Head of caudate nucleus (tissue), 42 donors: ENCODE measurements at regions of chr10 and their contacts with region 1.

Region 1: DNA sequence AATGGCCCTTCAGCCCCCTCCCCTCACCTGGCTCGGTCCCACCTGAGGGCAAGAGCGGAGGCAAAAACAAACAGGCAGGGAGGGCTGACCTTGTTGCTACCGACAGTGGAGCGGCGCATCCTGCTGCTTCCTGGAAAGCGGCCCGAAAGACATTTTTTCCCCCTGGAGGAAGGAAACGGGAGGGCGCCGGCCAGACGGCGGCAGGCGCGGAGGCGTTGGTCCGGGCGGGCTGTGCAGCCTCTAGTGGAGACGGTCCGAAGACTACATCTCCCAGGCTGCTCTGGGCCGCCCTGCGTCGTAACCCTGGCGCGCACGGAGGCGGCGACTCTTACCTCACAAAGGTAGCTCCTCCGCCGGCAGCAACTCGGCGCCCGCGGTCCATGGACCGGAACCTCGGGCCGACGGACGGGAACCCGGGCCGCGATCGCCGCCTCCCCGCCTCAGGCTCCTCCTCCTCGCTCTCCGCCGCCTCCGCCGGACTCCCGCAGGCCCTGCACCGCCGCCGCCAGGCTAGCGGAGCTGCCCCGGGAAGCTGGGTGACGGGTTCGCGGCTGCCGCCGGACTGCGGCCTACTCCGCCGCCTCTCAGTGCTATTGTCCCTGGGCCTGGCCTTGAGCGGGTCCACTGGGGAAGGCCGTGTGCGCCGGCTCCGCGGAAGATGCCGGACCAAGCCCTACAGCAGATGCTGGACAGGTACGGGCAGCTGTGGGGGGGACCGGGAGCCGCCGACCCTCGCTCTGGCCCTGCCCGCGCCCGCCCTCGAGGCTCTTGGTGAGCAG is at the starts of genes CPEB3 and MARCHF5:
- DNase-seq: peak; percentile 89 to 98 (median 95)

Region 2: DNA sequence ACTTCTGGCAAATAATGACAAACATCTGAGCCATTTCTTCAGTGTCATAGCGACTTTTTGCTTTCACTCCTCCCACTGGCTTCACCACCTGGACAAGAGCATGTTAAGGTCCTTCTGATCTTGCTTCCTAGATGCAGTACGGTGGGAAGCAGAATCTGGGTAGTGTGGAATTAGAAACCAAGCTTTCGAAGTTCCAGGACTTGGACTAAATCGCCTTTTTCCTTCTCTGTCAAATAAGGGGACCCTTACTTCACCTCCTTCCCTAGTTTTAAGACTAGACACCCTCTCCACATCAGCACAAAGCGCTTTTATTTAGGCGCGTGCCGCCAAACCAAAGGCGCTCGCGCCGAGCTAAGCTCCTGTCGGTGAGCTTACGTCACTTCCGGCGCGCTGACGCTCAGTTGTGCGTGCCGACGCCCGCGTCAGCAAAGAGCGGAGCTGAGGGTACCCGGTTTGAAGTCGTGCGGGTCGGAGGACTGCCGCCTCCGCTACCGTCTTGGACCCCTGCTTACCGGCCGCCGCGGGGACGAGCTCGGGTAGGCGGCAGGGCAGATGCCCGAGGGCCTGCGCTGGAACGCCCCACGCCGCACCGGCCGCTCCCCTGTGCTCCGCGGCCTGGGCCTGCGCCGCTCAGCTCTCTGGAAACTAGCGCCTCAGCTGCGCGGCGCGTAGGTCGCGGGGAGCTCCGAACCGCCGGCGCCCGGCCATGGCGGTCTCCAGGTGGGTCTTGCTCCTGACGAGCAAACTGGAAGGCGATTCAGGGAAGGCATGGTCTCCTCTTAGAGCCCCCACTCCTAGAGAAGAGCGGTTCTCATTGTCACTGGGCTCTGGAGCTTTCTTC is 367.4 kb before region 1 on chr10 and contains the start of gene BTAF1:
- intact Hi-C with region 1: no loop called
- DNase-seq: peak; percentile 84 to 97 (median 95)

Region 3: DNA sequence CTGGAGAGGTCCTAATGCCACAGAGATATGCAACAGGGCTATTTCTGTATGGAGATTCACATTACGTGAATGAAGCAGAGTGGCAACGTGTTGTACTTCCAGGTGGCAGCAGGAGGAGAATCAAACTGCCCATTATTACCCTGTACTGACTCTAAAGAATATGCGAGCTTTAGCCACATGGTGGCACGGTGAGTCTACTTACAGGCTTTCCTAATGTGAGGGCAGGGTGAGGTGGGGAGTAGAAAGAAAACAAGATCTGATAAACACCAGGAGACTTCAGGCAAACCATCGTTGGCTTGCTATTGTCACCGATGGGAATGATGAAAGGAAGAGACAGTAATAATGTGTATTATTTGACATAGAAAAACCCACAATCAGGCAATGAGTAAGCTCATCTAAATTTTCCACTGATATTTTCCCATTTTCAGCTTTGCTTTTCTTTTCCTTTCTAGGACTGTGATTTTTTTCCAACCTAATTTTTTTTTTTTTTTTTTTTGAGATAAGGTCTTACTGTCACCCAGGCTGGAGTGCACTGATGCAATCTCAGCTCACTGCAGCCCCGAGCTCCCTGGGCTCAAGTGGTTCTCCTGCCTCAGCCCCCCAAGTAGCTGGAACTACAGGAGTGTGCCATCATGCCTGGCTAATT is 203.2 kb before region 1 on chr10:
- intact Hi-C with region 1: loop called (anchors 5 kb)
- DNase-seq: peak in 40 of 42 donors; percentile 33 to 86 (median 68)

Region 4: DNA sequence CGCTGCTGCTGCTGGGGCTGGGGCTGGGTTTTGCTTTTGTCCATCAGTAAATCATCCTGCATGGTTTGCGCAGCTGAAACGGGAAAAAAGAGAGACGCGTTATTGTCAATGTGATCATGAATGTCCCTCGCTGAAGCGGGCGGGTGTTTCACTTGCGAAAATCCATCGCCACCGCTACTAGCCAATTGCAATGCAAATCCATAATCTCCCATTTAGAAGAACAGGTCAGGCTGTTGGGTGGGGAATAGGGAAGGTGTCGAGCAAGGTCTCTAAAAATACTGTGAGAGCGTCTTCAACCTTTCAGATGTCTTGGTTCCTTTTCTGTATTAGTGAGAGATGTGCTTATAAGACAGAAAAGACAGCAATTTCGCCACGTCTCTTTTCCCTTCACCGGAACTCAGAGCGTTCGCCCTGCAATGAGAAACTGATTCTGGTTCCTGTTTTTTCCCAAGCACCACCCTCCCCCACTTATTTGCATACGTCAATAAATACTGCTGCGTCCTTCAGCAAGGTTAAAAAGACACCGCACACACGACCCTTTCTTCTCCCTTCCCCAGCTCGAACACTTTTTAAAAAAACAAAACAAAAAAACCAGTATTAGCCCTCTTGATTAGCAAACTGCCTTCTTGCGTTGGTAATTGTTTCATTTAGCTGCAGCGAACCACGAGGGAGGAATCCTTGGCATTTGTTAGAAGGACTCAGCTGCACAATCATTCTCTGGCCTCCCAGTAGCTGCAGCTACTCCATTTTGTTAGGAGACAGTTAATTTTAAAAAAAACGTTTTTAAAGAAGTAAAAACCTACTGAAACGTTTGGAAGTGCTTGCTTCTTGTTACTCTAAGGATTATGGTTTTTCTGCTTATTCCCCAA is 50.5 kb before region 1 on chr10:
- intact Hi-C with region 1: loop called (anchors 2 kb)
- DNase-seq: peak; percentile 14 to 87 (median 68)